ENCODE measurements at regions of chr7 and their contacts with region 1.

Region 1: GRCh38 chr7:106112117-106112971 is at the start of gene SYPL1:
- DNase-seq: peak; percentile 94
- ATAC-seq: peak; percentile 82
- H3K4me3 ChIP-seq: peak within 1 kb of the TSS; percentile 90
- H3K27ac ChIP-seq: peak within 1 kb of the TSS; percentile 71
- H3K4me1 ChIP-seq: peaks cover 30% of the 10 kb centered on the region
- H3K27me3 ChIP-seq: no peaks in the 10 kb centered on the region
- CTCF ChIP-seq: 0 out of 2 replicates have a peak, but pooled peaks have one; percentile 20
- total RNA-seq, gene SYPL1: 45.9 and 57.9 TPM in 2 replicates

Region 2: GRCh38 chr7:105896407-105896911 is 215.9 kb before region 1 on chr7:
- CTCF ChIA-PET with region 1: interaction called, 10 read pairs
- POLR2A ChIA-PET with region 1: no interaction called
- intact Hi-C with region 1: no loop called
- DNase-seq: peak; percentile 38
- ATAC-seq: peak; percentile 98
- H3K4me3 ChIP-seq: no peak overlapping the region
- H3K27ac ChIP-seq: no peak overlapping the region
- H3K4me1 ChIP-seq: 0 out of 2 replicates have a peak, but pooled peaks cover 4% of the 10 kb centered on the region
- H3K27me3 ChIP-seq: no peaks in the 10 kb centered on the region
- CTCF ChIP-seq: no peak

Region 3: GRCh38 chr7:106056513-106057203 is 55.7 kb before region 1 on chr7:
- CTCF ChIA-PET with region 1: no interaction called
- POLR2A ChIA-PET with region 1: no interaction called
- intact Hi-C with region 1: no loop called
- DNase-seq: peak; percentile 92
- ATAC-seq: peak; percentile 95
- H3K4me3 ChIP-seq: no peak overlapping the region
- H3K27ac ChIP-seq: no peak overlapping the region
- H3K4me1 ChIP-seq: peaks cover 21% of the 10 kb centered on the region
- H3K27me3 ChIP-seq: no peaks in the 10 kb centered on the region
- CTCF ChIP-seq: peak; percentile 98

Region 4: GRCh38 chr7:106126170-106126938 is 14.0 kb after region 1 on chr7:
- CTCF ChIA-PET with region 1: no interaction called
- POLR2A ChIA-PET with region 1: interaction called, 11 read pairs
- intact Hi-C with region 1: no loop called
- DNase-seq: peak; percentile 97
- ATAC-seq: peak; percentile 91
- H3K4me3 ChIP-seq: peak overlapping the region; percentile 62
- H3K27ac ChIP-seq: no peak overlapping the region
- H3K4me1 ChIP-seq: peaks cover 20% of the 10 kb centered on the region
- H3K27me3 ChIP-seq: no peaks in the 10 kb centered on the region
- CTCF ChIP-seq: no peak

Region 5: GRCh38 chr7:106568680-106569499 is 456.5 kb after region 1 on chr7:
- CTCF ChIA-PET with region 1: no interaction called
- POLR2A ChIA-PET with region 1: interaction called, 19 read pairs
- intact Hi-C with region 1: no loop called
- DNase-seq: peak; percentile 41
- ATAC-seq: peak; percentile 41
- H3K4me3 ChIP-seq: no peak overlapping the region
- H3K27ac ChIP-seq: no peak overlapping the region; the same call in 1 of the 2 replicates
- H3K4me1 ChIP-seq: peaks cover 11% of the 10 kb centered on the region
- H3K27me3 ChIP-seq: no peaks in the 10 kb centered on the region
- CTCF ChIP-seq: no peak

Region 6: GRCh38 chr7:106750773-106751172 is 638.4 kb after region 1 on chr7:
- CTCF ChIA-PET with region 1: no interaction called
- POLR2A ChIA-PET with region 1: interaction called, 13 read pairs
- intact Hi-C with region 1: no loop called
- DNase-seq: no peak
- ATAC-seq: no peak
- H3K4me3 ChIP-seq: no peak overlapping the region
- H3K27ac ChIP-seq: no peak overlapping the region
- H3K4me1 ChIP-seq: no peaks in the 10 kb centered on the region
- H3K27me3 ChIP-seq: no peaks in the 10 kb centered on the region
- CTCF ChIP-seq: no peak

Measured in PC-3 (cell line).